ENCODE measurements at regions of chr5 and their contacts with region 1.

Region 1: GRCh38 chr5:112921833-112922817 is at the start of gene REEP5:
- DNase-seq: peak; percentile 83
- H3K4me3 ChIP-seq: peak within 1 kb of the TSS; percentile 53 to 99 (median 78)
- H3K27ac ChIP-seq: peak within 1 kb of the TSS; percentile 66
- H3K4me1 ChIP-seq: peaks cover 8% of the 10 kb centered on the region
- H3K27me3 ChIP-seq: no peaks in the 10 kb centered on the region
- CTCF ChIP-seq: peak; percentile 74 to 80
- POLR2A ChIP-seq: peak; percentile 89
- total RNA-seq, gene REEP5: 84.5 and 98.0 TPM in 2 replicates

Region 2: GRCh38 chr5:112338681-112339337 is 583.3 kb before region 1 on chr5:
- CTCF ChIA-PET with region 1: no interaction called
- POLR2A ChIA-PET with region 1: no interaction called
- dilution Hi-C with region 1: no loop called
- intact Hi-C with region 1: loop called (anchors 5 kb)
- DNase-seq: peak; percentile 91
- H3K4me3 ChIP-seq: no peak overlapping the region
- H3K27ac ChIP-seq: peak overlapping the region; percentile 90
- H3K4me1 ChIP-seq: peaks cover 22% of the 10 kb centered on the region
- H3K27me3 ChIP-seq: no peaks in the 10 kb centered on the region
- CTCF ChIP-seq: no peak
- POLR2A ChIP-seq: no peak

Region 3: DNA sequence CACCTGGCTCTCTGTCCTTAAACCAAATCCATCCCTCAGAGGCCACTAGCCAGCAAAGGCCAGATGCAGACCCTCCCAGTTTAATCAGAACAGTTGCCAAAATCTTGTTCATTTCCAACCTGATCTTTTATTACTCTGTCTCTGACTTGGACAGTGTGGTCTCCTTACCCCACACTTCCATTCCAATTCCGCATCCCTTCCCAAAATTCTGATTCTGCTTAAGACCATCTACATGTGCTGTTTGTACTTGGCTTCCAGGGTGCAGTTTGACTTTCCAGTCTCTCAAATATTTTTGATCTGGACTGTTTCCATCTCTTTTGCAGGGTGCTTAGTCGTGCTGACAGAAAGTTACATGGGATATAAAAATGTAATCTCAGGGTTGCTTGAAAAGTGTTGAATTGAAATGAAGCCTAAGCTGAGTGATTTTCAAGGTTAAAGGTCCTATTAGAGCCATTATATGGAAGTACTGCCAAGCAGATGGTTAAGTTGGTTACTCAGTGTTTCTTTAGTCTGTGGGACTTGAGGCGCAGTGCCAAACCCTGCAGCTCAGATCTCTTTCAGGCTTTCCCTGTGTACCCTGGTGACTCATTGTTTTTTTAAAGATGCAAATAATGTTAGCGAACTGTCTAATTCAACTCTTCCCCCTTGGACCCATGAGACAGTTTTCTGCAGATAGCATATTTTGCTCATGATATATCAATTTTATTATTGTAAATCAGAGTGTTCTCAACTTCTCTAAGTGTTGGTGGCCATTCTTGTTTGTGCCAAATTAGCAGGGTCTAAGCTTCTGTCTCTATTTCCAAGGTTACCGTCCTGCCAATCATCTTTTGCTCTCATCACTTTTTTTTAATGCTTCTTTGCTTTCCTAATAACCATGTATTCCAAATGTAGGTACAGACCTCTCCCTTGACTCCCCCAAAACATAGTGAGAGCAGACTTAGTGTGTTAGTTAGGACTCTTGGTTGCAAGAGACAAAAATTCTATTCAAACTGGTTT is 36.3 kb after region 1 on chr5:
- CTCF ChIA-PET with region 1: interaction called, 6 read pairs
- POLR2A ChIA-PET with region 1: no interaction called
- dilution Hi-C with region 1: no loop called
- intact Hi-C with region 1: loop called (anchors 1 kb)
- DNase-seq: peak; percentile 96
- H3K4me3 ChIP-seq: no peak overlapping the region
- H3K27ac ChIP-seq: no peak overlapping the region
- H3K4me1 ChIP-seq: peaks cover 28% of the 10 kb centered on the region
- H3K27me3 ChIP-seq: no peaks in the 10 kb centered on the region
- CTCF ChIP-seq: no peak
- POLR2A ChIP-seq: no peak

Region 4: GRCh38 chr5:112968411-112969106 is 46.4 kb after region 1 on chr5:
- CTCF ChIA-PET with region 1: interaction called, 12 read pairs
- POLR2A ChIA-PET with region 1: no interaction called
- dilution Hi-C with region 1: no loop called
- intact Hi-C with region 1: loop called (anchors 1 kb)
- DNase-seq: no peak
- H3K4me3 ChIP-seq: no peak overlapping the region
- H3K27ac ChIP-seq: no peak overlapping the region
- H3K4me1 ChIP-seq: peaks cover 4% of the 10 kb centered on the region
- H3K27me3 ChIP-seq: no peaks in the 10 kb centered on the region
- CTCF ChIP-seq: no peak
- POLR2A ChIP-seq: no peak

Region 5: GRCh38 chr5:112976432-112977309 is 54.5 kb after region 1 on chr5 and contains the start of gene DCP2:
- CTCF ChIA-PET with region 1: interaction called, 9 read pairs
- POLR2A ChIA-PET with region 1: interaction called, 5 read pairs
- dilution Hi-C with region 1: no loop called
- intact Hi-C with region 1: loop called (anchors 1 kb)
- DNase-seq: peak; percentile 99
- H3K4me3 ChIP-seq: peak within 1 kb of the TSS; percentile 98 to 99 (median 99)
- H3K27ac ChIP-seq: peak within 1 kb of the TSS; percentile 48
- H3K4me1 ChIP-seq: peaks cover 21% of the 10 kb centered on the region
- H3K27me3 ChIP-seq: no peaks in the 10 kb centered on the region
- CTCF ChIP-seq: no peak
- POLR2A ChIP-seq: peak; percentile 97
- total RNA-seq, gene DCP2: 49.1 and 60.0 TPM in 2 replicates

Region 6: DNA sequence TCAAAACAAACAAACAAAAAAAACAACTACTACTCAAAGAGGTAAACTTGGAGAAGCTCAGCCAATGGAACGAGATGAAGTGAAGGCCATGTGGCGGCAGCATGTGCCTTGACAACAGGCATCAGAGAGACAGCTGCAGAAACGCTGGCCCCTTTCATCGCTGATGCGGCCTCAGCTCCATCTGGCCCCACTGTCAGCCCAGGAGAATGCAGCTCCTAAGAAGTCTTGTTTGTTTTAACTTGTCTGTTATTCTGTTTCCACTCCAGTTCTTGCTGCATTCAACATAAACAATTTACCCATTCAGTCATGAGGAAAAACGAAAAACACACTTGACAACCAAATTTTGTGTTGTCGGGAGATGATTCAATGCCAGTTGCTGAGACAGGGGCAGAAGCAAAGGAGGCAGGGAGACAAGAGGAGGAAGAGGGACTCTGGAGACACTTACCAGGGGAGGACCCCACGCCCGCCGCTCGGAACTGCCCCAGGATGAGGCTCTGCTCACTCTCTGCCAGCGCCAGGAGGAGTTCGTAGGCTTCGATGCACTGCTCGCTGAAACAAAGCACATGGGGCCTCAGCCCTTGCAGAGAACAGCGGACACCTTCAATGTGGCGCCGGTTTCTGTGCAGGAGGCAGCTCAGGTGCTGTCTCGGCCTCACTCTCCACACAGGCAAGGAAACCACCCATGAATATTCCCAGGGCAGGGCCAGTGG is 145.7 kb after region 1 on chr5:
- CTCF ChIA-PET with region 1: no interaction called
- POLR2A ChIA-PET with region 1: no interaction called
- dilution Hi-C with region 1: no loop called
- intact Hi-C with region 1: no loop called
- DNase-seq: no peak
- H3K4me3 ChIP-seq: no peak overlapping the region
- H3K27ac ChIP-seq: no peak overlapping the region
- H3K4me1 ChIP-seq: peaks cover 8% of the 10 kb centered on the region
- H3K27me3 ChIP-seq: no peaks in the 10 kb centered on the region
- CTCF ChIP-seq: no peak
- POLR2A ChIP-seq: no peak

Measured in endothelial cell of umbilical vein (primary cell).